ENCODE measurements at regions of chr10 and their contacts with region 1.

Region 1: DNA sequence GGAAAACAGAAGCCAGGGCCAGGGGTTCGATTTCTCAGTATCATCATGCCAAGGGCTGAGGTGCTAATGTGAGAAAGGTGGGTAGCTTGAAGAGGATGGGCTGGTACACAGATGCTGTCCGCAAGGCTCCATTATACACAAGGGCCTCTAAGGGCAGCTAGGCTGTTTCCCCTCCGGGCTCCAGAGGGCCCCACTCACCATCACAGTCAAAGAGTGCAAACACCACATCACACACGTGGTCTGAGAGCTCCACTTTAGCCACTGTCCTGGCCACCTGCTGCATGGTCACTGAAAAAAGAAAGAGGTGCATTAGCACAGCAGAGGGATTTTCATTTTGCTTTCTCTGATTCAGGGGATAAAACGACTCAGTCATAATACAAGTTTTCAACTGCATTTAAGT is 20.9 kb upstream of the DNAJB12 start:
- DNase-seq: no peak
- ATAC-seq: no peak
- H3K4me3 Mint-ChIP-seq: no peak overlapping the region
- H3K27ac Mint-ChIP-seq: no peak overlapping the region
- H3K4me1 Mint-ChIP-seq: no peaks in the 10 kb centered on the region
- H3K27me3 Mint-ChIP-seq: no peaks in the 10 kb centered on the region
- CTCF ChIP-seq: no peak

Region 2: GRCh38 chr10:72435570-72435969 is 60.0 kb after region 1 on chr10:
- CTCF ChIA-PET with region 1: no interaction called
- POLR2A ChIA-PET with region 1: interaction called, 14 read pairs
- intact Hi-C with region 1: no loop called
- DNase-seq: no peak
- ATAC-seq: no peak
- H3K4me3 Mint-ChIP-seq: no peak overlapping the region
- H3K27ac Mint-ChIP-seq: no peak overlapping the region
- H3K4me1 Mint-ChIP-seq: peaks cover 1% of the 10 kb centered on the region
- H3K27me3 Mint-ChIP-seq: no peaks in the 10 kb centered on the region
- CTCF ChIP-seq: no peak

Region 3: DNA sequence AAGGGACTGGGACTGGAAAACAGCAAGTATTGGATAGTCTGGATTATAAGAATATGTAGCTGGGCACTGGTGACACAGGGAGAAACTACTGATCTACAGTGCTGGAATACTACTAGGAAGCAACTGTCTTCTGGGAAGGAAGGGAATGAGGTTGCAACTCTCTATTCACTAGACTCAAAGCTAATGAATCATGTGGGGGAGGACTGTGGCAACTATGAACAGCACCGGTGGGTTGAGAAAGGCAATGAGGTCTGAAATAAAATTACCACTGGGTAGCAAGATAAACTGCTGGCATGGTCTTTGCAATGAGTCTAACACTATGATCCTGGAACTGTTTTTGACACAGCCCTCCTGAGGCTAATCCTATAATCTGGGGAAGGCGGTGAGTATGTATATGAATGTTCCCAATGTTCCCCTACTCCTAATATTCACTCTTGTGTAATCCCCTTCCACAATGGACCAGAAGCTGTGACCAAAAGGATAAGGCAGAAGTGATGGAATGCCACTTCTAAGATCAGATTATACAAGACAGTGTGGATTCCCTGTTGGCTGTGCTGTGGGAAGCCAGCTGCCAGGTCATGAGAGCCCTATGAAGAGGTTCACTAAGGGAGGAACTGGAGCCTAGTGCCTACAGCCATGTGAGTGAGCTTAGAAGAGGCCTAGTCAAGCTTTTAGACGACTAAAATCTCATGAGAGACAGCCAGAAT is 80.5 kb after region 1 on chr10:
- CTCF ChIA-PET with region 1: no interaction called
- POLR2A ChIA-PET with region 1: no interaction called
- intact Hi-C with region 1: no loop called
- DNase-seq: no peak
- ATAC-seq: no peak
- H3K4me3 Mint-ChIP-seq: no peak overlapping the region
- H3K27ac Mint-ChIP-seq: no peak overlapping the region
- H3K4me1 Mint-ChIP-seq: peaks cover 12% of the 10 kb centered on the region
- H3K27me3 Mint-ChIP-seq: no peaks in the 10 kb centered on the region
- CTCF ChIP-seq: no peak

Measured in activated B cell treated with CpG ODN at 0.5 μM for 24 hours (primary cell).